SK-N-SH (cell line): ENCODE measurements at regions of chr3 and their contacts with region 1.

Region 1: GRCh38 chr3:170307671-170308403 is 49.7 kb upstream of the SKIL start:
- DNase-seq: no peak
- H3K4me3 ChIP-seq: no peak overlapping the region
- H3K27ac ChIP-seq: no peak overlapping the region
- H3K4me1 ChIP-seq: no peaks in the 10 kb centered on the region; a peak in 1 of 4 replicates
- H3K27me3 ChIP-seq: no peaks in the 10 kb centered on the region
- CTCF ChIP-seq: no peak
- EP300 ChIP-seq: no peak
- RAD21 ChIP-seq: no peak

Region 2: GRCh38 chr3:170357176-170357919 is 49.5 kb after region 1 on chr3 and contains the start of gene SKIL:
- CTCF ChIA-PET with region 1: interaction called, 15 read pairs
- POLR2A ChIA-PET with region 1: no interaction called
- DNase-seq: peak; percentile 92
- H3K4me3 ChIP-seq: peak within 1 kb of the TSS; percentile 88 to 92
- H3K27ac ChIP-seq: peak within 1 kb of the TSS; percentile 99 to 100
- H3K4me1 ChIP-seq: peaks cover 25 to 36% of the 10 kb centered on the region in 2 experiments
- H3K27me3 ChIP-seq: no peaks in the 10 kb centered on the region
- CTCF ChIP-seq: no peak
- EP300 ChIP-seq: peak; percentile 18 to 54; a peak in 1 of 4 replicates
- RAD21 ChIP-seq: no peak
- polyA plus RNA-seq, gene SKIL: 3.9 and 5.1 TPM in 2 replicates

Region 3: GRCh38 chr3:170368921-170369320 is 61.1 kb after region 1 on chr3:
- CTCF ChIA-PET with region 1: interaction called, 10 read pairs
- POLR2A ChIA-PET with region 1: no interaction called
- DNase-seq: peak; percentile 45
- H3K4me3 ChIP-seq: no peak overlapping the region
- H3K27ac ChIP-seq: no peak overlapping the region
- H3K4me1 ChIP-seq: peaks cover 0 to 3% of the 10 kb centered on the region in 2 experiments; a peak in 3 of 4 replicates
- H3K27me3 ChIP-seq: no peaks in the 10 kb centered on the region
- CTCF ChIP-seq: peak; percentile 58
- EP300 ChIP-seq: no peak
- RAD21 ChIP-seq: peak; percentile 47